ENCODE measurements at regions of chr11 and their contacts with region 1.

Region 1: DNA sequence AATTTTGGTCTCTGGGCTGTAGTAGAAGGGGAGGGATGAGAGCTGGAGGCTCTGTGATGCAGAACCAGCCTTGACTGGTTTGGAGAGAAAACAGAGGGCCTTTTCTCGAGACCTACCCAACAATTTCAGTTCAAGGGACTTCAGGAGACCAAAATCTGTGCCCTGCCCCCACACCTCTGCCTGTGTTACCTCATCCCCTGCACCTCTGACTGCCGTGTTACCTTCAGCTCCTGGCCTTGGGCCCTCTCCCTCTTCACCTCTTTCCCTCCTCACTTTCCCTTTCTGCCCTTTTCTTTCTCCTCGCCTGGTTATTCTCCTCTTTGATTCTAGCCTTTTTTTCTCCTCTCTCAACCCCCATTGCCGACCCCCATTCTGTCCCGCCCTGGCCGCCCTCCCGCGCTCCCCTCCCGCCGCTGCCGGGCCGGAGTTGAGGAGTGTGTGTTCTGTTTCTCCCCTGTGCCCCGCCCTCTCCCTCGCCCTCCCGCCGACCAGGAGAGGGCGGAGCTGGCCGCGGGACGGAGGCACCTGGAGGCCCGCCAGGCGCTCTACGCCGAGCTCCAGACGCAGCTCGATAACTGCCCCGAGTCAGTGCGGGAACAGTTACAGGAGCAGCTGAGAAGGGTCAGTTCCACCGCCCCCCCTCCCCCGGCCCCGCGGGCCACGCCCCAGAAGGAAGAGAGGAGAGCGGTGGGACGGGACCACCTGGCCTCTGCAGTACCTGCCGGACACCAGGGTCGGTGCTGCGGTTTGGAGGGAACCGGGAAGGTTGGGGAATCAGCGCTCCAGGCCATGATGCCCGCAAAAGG is 27.2 kb downstream of the PHLDB1 start:
- DNase-seq: peak; percentile 87
- H3K4me3 ChIP-seq: peak overlapping the region; percentile 4
- H3K27ac ChIP-seq: no peak overlapping the region
- H3K4me1 ChIP-seq: peaks cover 19% of the 10 kb centered on the region
- H3K27me3 ChIP-seq: no peaks in the 10 kb centered on the region
- CTCF ChIP-seq: no peak

Region 2: DNA sequence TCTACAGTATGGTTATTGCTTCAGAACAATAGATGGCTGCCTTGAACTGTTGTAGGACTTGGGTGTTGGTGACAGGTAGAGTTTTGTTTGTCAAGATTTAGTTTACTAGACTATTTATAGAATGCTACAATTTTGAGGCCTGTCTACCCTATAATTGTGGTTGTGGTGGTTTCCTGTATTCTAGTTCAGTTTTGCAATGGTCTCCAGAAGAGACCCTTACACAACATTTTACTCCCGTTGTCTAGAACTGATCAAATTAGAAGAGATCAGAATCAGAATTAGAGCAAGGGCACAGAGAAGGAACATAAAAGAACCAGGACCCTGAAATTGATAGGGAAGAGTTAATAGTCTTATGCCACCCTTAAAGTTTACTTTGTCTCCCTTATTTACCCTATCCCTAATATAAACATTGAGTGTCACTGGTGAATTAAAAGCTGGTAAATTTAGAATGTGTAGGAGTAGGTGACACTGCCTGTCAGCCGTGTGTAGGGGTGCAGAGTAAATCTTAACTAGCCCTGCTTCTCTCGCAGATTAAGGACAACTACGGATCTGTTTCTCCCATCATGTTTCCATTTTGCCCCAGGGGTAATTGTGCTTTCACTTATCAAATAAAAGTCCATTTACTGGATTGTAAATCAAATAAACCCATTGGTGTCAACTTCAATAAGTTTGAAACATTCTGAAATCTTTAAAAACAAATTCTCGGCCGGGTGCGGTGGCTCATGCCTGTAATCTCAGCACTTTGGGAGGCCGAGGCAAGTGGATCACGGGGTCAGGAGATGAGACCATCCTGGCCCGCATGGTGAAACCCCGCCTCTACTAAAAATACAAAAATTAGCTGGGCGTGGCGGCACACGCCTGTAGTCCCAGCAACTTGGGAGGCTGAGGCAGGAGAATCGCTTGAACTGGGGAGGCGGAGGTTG is 38.1 kb before region 1 on chr11:
- intact Hi-C with region 1: loop called (anchors 5 kb)
- DNase-seq: no peak
- H3K4me3 ChIP-seq: no peak overlapping the region
- H3K27ac ChIP-seq: no peak overlapping the region
- H3K4me1 ChIP-seq: no peaks in the 10 kb centered on the region
- H3K27me3 ChIP-seq: no peaks in the 10 kb centered on the region
- CTCF ChIP-seq: no peak